Activated CD4-positive, alpha-beta T cell treated with anti-CD3 and anti-CD28 coated beads, Interleukin-2, amount 10 ng/mL, durations not matched to agents 24 days and 14 days (primary cell): ENCODE measurements at regions of chr15 and their contacts with region 1.

Region 1: GRCh38 chr15:99928429-99928981 is 195.3 kb upstream of the LYSMD4 start:
- DNase-seq: peak; percentile 97
- H3K4me3 Mint-ChIP-seq: peak overlapping the region; percentile 89
- H3K27ac Mint-ChIP-seq: peak overlapping the region; percentile 88
- H3K4me1 Mint-ChIP-seq: peaks cover 12% of the 10 kb centered on the region
- H3K27me3 Mint-ChIP-seq: peaks cover 18% of the 10 kb centered on the region

Region 2: GRCh38 chr15:99250494-99251435 is 677.7 kb before region 1 on chr15:
- intact Hi-C with region 1: loop called (anchors 10 kb)
- DNase-seq: peak; percentile 99
- H3K4me3 Mint-ChIP-seq: peak overlapping the region; percentile 94
- H3K27ac Mint-ChIP-seq: peak overlapping the region; percentile 94
- H3K4me1 Mint-ChIP-seq: peaks cover 26% of the 10 kb centered on the region
- H3K27me3 Mint-ChIP-seq: no peaks in the 10 kb centered on the region

Region 3: GRCh38 chr15:99777136-99777535 is 151.4 kb before region 1 on chr15:
- intact Hi-C with region 1: no loop called
- DNase-seq: no peak
- H3K4me3 Mint-ChIP-seq: no peak overlapping the region
- H3K27ac Mint-ChIP-seq: no peak overlapping the region
- H3K4me1 Mint-ChIP-seq: no peaks in the 10 kb centered on the region
- H3K27me3 Mint-ChIP-seq: peaks cover 9% of the 10 kb centered on the region

Region 4: GRCh38 chr15:99818872-99819271 is 109.6 kb before region 1 on chr15:
- intact Hi-C with region 1: loop called (anchors 10 kb)
- DNase-seq: no peak
- H3K4me3 Mint-ChIP-seq: no peak overlapping the region
- H3K27ac Mint-ChIP-seq: no peak overlapping the region
- H3K4me1 Mint-ChIP-seq: peaks cover 8% of the 10 kb centered on the region
- H3K27me3 Mint-ChIP-seq: no peaks in the 10 kb centered on the region

Region 5: DNA sequence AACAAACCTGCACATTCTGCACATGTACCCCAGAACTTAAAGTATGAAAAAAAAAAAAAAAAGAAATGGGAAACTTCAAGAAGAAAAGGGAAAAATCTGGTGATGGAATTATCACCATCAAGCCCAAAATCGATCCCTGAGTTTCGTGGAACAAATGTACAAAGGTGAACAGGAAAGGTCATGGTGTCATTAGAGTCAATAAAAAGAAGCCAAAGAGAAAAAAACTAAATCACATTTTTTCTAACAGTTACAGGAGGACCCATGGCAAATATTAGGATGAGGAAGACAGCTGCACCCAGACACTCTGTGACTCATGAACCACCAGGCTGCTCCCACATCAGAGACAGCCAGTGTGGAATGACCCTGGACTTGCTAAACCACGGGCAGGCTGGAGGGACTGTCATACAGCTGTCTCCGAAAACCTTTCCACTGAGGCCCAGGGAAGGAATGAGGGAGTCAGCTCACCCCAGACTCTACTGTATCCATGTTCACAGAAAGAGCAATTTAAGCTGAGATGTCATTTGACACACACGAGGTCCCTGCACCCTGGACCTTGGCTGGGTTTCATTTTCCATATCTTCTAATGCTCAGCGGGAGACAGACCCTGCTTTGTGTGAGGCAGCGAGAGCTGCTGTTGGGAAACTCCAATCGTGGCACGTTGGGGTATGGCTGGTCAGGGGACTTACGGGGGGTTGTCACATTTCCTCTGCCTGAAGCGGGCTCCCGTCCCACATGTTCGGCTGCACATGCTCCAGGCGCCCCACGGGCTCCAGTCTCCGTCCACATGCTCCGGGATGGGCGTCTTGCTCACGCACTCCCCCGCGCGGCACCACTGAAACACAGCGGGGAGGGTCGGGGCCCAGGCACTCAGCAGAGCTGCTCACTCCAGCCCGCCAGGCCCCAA is 203.1 kb after region 1 on chr15:
- intact Hi-C with region 1: loop called (anchors 10 kb)
- DNase-seq: peak; percentile 72
- H3K4me3 Mint-ChIP-seq: peak overlapping the region; percentile 69
- H3K27ac Mint-ChIP-seq: peak overlapping the region; percentile 37
- H3K4me1 Mint-ChIP-seq: no peaks in the 10 kb centered on the region
- H3K27me3 Mint-ChIP-seq: peaks cover 3% of the 10 kb centered on the region

Region 6: DNA sequence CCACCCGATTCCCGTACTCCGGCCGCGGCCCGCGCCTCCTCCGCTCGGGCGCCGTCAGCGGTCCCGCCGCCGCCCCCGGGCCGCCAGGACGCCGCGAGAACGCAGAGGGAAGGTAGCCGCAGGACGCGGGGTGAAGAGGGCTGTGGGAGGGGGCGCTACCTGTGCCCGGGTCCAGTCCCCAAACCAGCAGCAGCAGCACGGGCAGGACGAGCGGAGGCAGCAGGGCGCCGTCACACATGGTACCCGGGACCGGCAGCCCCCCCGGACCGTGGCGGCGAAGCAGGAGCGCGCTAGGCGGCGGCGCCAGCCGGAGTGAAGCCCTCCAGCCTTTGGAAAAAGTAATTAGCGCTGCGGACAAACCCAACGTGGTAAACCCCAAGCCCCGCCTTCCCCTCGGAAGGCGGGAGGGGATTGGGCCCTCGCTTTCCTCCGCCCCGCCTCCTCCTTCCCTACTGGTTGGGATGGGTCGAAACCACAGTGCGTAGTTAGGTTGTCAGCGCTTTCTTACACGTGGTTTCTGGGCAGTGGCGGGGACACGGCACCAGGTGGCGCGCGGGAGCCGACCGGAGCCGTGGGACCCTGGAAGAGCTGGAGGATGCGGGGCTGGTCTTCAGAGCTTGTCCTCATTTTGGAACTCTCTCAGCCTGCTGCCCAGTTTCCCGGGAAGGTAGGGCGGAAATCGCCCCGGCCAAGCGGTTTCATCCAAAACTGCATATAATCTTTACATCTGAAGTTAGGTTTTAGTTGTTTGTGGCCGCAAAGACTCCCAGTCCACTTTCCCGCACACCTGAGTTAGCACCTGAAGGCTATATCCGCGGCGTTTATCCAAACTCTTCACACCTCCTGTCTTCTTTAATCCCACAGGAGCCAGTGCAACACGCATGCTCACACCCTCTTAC is 413.4 kb after region 1 on chr15 and contains the start of gene ADAMTS17:
- intact Hi-C with region 1: loop called (anchors 1 kb)
- DNase-seq: peak; percentile 98
- H3K4me3 Mint-ChIP-seq: peak within 1 kb of the TSS; percentile 70
- H3K27ac Mint-ChIP-seq: no peak within 1 kb of the TSS
- H3K4me1 Mint-ChIP-seq: peaks cover 17% of the 10 kb centered on the region
- H3K27me3 Mint-ChIP-seq: peaks cover 46% of the 10 kb centered on the region
- total RNA-seq, gene ADAMTS17: 0.47 and 1.1 TPM in 2 replicates

Region 7: DNA sequence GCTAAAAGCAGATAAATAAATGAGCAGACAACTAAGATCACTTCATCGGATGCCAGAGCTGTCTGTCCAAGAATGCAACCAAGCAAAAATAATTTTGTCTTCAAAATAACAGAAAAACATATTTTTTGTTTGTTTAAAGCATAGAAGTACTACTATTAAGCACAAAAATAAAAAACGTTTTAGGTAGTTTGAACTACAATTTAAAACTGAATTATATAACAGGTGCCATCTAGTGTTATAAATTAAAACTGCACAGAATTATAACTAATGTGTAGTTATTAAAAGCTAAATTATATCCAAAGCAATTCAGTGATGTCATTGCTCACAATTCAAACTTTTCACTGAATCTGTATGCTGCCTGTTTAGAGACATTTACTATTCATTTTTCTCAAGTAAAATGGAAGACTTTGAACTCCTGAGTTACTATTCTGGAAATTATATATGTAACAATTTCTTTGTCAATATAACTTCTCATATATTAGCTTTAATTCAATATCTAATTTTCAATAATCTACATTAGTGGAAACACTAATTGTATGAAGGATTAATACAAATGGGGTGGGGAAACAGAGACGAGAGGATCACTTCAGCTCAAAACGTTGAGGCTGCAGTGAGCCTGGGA is 644.0 kb after region 1 on chr15:
- intact Hi-C with region 1: loop called (anchors 10 kb)
- DNase-seq: no peak
- H3K4me3 Mint-ChIP-seq: peak overlapping the region; percentile 78
- H3K27ac Mint-ChIP-seq: no peak overlapping the region
- H3K4me1 Mint-ChIP-seq: peaks cover 49% of the 10 kb centered on the region
- H3K27me3 Mint-ChIP-seq: no peaks in the 10 kb centered on the region

Region 8: DNA sequence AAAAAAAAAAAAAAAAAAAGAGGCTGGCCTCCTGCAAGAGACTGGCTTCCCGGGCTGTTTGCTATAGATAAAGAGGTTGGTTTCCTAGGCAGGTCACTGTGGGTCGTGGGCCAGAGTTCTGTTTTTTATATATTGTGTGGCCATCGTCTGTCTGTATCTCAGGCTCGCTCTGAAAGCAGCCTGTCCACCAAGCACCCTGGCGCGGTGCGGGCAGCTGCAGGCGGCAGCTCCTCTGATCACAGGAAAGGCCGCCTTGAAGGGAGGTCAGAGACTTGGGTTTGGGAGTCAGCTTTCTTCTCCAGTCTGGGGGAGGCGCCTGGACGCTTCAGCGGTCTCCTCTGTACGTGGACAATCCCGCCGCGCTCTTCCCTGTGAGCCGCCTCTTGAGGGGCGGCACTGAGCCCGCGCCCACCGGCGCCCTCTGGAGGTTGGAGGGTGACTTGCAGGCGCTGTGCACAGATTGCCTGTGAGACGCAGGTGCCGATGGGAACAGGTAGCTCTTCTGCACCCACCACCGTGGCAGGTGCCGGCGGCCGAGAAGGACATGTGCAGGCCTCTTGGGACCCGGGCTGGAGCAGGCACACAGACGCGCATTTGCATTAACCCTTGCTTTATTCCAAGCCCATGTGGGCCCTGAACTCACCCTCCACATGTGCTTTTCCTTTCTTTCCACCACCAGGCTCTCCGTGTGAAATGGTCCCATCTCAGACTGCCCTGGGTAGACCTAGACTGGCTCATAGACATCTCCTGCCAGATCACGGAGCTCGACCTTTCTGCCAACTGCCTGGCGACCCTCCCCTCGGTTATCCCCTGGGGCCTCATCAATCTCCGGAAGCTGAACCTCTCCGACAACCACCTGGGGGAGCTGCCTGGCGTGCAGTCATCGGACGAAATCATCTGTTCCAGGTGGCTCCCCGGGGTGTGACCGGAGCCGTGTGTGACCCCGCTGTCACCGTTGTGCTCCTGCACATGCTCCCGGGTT is 1079.9 kb after region 1 on chr15:
- intact Hi-C with region 1: loop called (anchors 5 kb)
- DNase-seq: peak; percentile 96
- H3K4me3 Mint-ChIP-seq: peak overlapping the region; percentile 92
- H3K27ac Mint-ChIP-seq: no peak overlapping the region
- H3K4me1 Mint-ChIP-seq: peaks cover 14% of the 10 kb centered on the region
- H3K27me3 Mint-ChIP-seq: peaks cover 17% of the 10 kb centered on the region